Naive thymus-derived CD4-positive, alpha-beta T cell (primary cell): ENCODE measurements at regions of chr13 and their contacts with region 1.

Region 1: DNA sequence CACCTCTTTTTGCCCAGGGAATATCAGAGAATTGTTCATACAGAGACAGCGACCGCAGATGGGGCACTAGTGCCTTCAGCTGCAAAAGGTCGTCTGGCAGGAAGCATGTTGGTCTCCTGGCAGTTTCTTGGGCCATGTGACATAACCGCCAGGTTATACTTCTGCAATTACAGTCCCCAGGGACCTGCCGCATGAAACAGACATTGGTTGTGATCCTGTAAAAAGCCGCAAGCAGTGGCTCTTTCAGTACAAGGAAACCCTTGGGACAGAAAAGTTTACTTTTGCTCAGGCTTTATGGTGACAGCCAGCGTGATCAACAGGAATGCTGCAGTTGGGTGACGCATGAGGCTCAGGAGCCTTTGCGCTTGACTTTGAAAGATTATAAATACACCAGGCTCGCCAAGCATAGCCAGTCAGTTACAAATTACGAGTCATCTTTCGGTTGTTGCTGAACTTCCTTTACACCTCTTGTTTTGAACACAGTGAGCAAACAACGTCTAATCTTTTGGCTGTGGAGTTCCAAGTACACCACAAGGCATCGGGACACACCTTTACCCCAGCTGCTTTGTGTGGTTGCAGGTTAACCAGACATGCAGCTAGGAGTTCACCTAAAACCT is 50.5 kb upstream of the UBE2L5 start:
- DNase-seq: peak; percentile 22 to 92 (median 89)
- ATAC-seq: peak; percentile 78
- H3K4me3 ChIP-seq: peak overlapping the region; percentile 37
- H3K4me3 Mint-ChIP-seq: peak overlapping the region; percentile 51 to 91 (median 76)
- H3K27ac ChIP-seq: peak overlapping the region; percentile 58
- H3K27ac Mint-ChIP-seq: peak overlapping the region; percentile 90 to 98 (median 95)
- H3K4me1 ChIP-seq: peaks cover 73% of the 10 kb centered on the region in 2 donors
- H3K4me1 Mint-ChIP-seq: peaks cover 68 to 87% (median 78%) of the 10 kb centered on the region in 7 donors
- H3K27me3 ChIP-seq: no peaks in the 10 kb centered on the region
- H3K27me3 Mint-ChIP-seq: no peaks in the 10 kb centered on the region

Region 2: GRCh38 chr13:29801737-29802305 is 569.9 kb before region 1 on chr13:
- CTCF ChIA-PET with region 1: no interaction called
- POLR2A ChIA-PET with region 1: no interaction called
- intact Hi-C with region 1: no loop called
- DNase-seq: no peak
- ATAC-seq: no peak
- H3K4me3 ChIP-seq: no peak overlapping the region
- H3K4me3 Mint-ChIP-seq: no peak overlapping the region
- H3K27ac ChIP-seq: no peak overlapping the region
- H3K27ac Mint-ChIP-seq: no peak overlapping the region
- H3K4me1 ChIP-seq: peaks cover 0 to 4% of the 10 kb centered on the region in 2 donors
- H3K4me1 Mint-ChIP-seq: peaks cover 2 to 46% (median 34%) of the 10 kb centered on the region in 7 donors
- H3K27me3 ChIP-seq: no peaks in the 10 kb centered on the region
- H3K27me3 Mint-ChIP-seq: no peaks in the 10 kb centered on the region

Region 3: GRCh38 chr13:30132623-30133553 is 238.9 kb before region 1 on chr13:
- CTCF ChIA-PET with region 1: interaction called, 12 read pairs
- POLR2A ChIA-PET with region 1: interaction called, 20 read pairs
- intact Hi-C with region 1: loop called in 1 of 2 experiments (anchors 1 kb)
- DNase-seq: peak; percentile 91 to 98 (median 95)
- ATAC-seq: peak; percentile 99
- H3K4me3 ChIP-seq: peak overlapping the region; percentile 16
- H3K4me3 Mint-ChIP-seq: peak overlapping the region in 8 of 10 donors; percentile 33 to 73 (median 64)
- H3K27ac ChIP-seq: no peak overlapping the region
- H3K27ac Mint-ChIP-seq: peak overlapping the region in 8 of 9 donors; percentile 11 to 89 (median 72)
- H3K4me1 ChIP-seq: peaks cover 4 to 7% of the 10 kb centered on the region in 2 donors
- H3K4me1 Mint-ChIP-seq: peaks cover 12 to 19% (median 17%) of the 10 kb centered on the region in 7 donors
- H3K27me3 ChIP-seq: no peaks in the 10 kb centered on the region
- H3K27me3 Mint-ChIP-seq: no peaks in the 10 kb centered on the region

Region 4: GRCh38 chr13:30346153-30346788 is 25.5 kb before region 1 on chr13:
- CTCF ChIA-PET with region 1: interaction called, 8 read pairs
- POLR2A ChIA-PET with region 1: interaction called, 16 read pairs
- intact Hi-C with region 1: loop called (anchors 1 kb)
- DNase-seq: peak in 7 of 9 donors; percentile 59 to 86 (median 73)
- ATAC-seq: peak; percentile 94
- H3K4me3 ChIP-seq: peak overlapping the region; percentile 7
- H3K4me3 Mint-ChIP-seq: peak overlapping the region; percentile 46 to 82 (median 75)
- H3K27ac ChIP-seq: no peak overlapping the region
- H3K27ac Mint-ChIP-seq: peak overlapping the region; percentile 23 to 84 (median 62)
- H3K4me1 ChIP-seq: peaks cover 29 to 31% of the 10 kb centered on the region in 2 donors
- H3K4me1 Mint-ChIP-seq: peaks cover 35 to 60% (median 48%) of the 10 kb centered on the region in 7 donors
- H3K27me3 ChIP-seq: no peaks in the 10 kb centered on the region
- H3K27me3 Mint-ChIP-seq: peaks cover 0 to 2% (median 0%) of the 10 kb centered on the region in 5 donors

Region 5: DNA sequence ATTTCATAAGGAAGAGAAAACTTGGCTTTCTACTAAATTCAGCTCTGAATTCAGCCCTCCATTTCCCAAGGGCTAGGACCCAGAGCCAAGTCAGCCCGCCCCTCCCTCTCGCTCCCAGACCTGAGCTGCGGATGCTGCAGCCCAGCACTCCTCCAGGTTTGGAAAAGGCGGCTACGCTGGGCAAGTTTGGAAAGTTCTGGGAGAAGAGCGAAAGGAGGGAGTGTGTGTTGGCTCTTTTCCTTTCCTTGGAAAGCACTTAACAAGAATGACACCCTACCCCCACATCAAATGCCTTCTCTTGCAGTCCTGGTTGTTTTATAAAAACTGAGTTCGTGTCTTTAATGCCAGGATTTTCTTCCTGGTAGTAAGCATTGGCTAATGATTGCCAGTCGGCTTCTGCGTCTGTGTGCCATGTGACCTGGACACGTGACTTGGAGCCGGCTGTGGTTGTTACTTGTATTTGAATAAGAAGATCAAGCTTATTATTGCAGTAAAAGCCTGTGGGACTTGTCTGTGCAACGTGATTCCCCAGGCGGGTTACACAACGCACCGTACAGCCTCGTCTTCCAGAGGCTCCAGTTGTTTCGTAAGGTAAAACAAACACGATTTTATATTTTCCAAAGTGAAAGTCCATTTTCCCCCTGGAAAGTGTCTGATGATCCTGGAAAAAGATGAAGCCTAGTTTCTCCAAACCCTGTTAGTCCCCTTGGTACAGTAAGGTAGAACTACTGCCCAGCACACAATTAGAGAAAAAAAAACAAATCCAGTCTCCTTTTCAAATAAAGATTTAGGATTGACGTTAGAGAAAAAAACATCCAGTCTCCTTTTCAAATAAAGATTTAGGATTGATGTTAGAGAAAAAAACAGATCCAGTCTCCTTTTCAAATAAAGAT is 23.7 kb after region 1 on chr13:
- CTCF ChIA-PET with region 1: interaction called, 56 read pairs
- POLR2A ChIA-PET with region 1: interaction called, 281 read pairs
- intact Hi-C with region 1: loop called (anchors 1 kb)
- DNase-seq: peak; percentile 22 to 83 (median 71)
- ATAC-seq: peak; percentile 82
- H3K4me3 ChIP-seq: peak overlapping the region; percentile 71
- H3K4me3 Mint-ChIP-seq: peak overlapping the region; percentile 83 to 97 (median 88)
- H3K27ac ChIP-seq: peak overlapping the region; percentile 78
- H3K27ac Mint-ChIP-seq: peak overlapping the region; percentile 90 to 97 (median 95)
- H3K4me1 ChIP-seq: peaks cover 16 to 31% of the 10 kb centered on the region in 2 donors
- H3K4me1 Mint-ChIP-seq: peaks cover 17 to 58% (median 54%) of the 10 kb centered on the region in 7 donors
- H3K27me3 ChIP-seq: no peaks in the 10 kb centered on the region
- H3K27me3 Mint-ChIP-seq: no peaks in the 10 kb centered on the region

Region 6: GRCh38 chr13:30572859-30573275 is 201.1 kb after region 1 on chr13:
- CTCF ChIA-PET with region 1: interaction called, 3 read pairs
- POLR2A ChIA-PET with region 1: interaction called, 3 read pairs
- intact Hi-C with region 1: loop called in 1 of 2 experiments (anchors 1 kb)
- DNase-seq: peak in 7 of 9 donors; percentile 19 to 65 (median 49)
- ATAC-seq: peak; percentile 69
- H3K4me3 ChIP-seq: peak overlapping the region; percentile 55
- H3K4me3 Mint-ChIP-seq: peak overlapping the region; percentile 66 to 88 (median 81)
- H3K27ac ChIP-seq: peak overlapping the region; percentile 81
- H3K27ac Mint-ChIP-seq: peak overlapping the region; percentile 88 to 97 (median 94)
- H3K4me1 ChIP-seq: peaks cover 13 to 24% of the 10 kb centered on the region in 2 donors
- H3K4me1 Mint-ChIP-seq: peaks cover 14 to 42% (median 36%) of the 10 kb centered on the region in 7 donors
- H3K27me3 ChIP-seq: no peaks in the 10 kb centered on the region
- H3K27me3 Mint-ChIP-seq: peaks cover 0 to 3% (median 0%) of the 10 kb centered on the region in 5 donors

Region 7: DNA sequence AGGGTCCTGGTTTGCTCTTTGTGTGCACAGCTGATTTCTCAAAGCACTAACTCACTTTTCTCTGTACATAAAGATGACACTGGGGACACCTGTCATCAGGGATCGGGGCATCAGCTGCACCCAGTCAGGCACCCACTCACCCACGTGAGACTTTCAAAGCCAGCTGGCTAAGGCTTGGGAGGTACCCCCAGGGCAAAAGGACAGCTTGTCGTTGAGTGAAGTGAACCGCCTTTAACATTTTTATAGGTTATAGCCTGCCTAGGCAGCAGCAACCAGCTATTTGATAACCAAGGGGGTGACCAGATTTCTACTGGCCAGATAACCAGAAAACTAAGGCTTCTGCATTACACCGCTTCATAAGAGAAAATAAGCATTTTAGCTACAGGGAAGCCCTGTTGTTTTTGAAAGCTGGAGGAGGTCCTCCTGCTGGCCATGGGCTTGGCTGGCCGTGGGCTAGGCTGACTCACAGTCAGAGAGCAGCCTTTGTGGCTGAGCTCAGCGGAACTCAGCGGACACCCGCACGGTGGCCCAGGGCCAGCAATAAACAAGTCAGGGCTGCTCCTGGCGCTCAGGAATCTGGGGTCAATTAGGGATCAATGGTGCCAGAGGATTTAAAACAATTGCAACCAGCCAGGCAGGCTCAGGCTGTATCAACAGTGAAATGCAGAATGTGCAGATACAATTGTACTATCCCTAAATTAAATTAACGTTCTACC is 420.7 kb after region 1 on chr13:
- CTCF ChIA-PET with region 1: no interaction called
- POLR2A ChIA-PET with region 1: no interaction called
- intact Hi-C with region 1: no loop called
- DNase-seq: no peak
- ATAC-seq: no peak
- H3K4me3 ChIP-seq: no peak overlapping the region
- H3K4me3 Mint-ChIP-seq: no peak overlapping the region
- H3K27ac ChIP-seq: no peak overlapping the region
- H3K27ac Mint-ChIP-seq: no peak overlapping the region
- H3K4me1 ChIP-seq: peaks cover 0 to 9% of the 10 kb centered on the region in 2 donors
- H3K4me1 Mint-ChIP-seq: peaks cover 6 to 32% (median 8%) of the 10 kb centered on the region in 7 donors
- H3K27me3 ChIP-seq: no peaks in the 10 kb centered on the region
- H3K27me3 Mint-ChIP-seq: no peaks in the 10 kb centered on the region

Region 8: DNA sequence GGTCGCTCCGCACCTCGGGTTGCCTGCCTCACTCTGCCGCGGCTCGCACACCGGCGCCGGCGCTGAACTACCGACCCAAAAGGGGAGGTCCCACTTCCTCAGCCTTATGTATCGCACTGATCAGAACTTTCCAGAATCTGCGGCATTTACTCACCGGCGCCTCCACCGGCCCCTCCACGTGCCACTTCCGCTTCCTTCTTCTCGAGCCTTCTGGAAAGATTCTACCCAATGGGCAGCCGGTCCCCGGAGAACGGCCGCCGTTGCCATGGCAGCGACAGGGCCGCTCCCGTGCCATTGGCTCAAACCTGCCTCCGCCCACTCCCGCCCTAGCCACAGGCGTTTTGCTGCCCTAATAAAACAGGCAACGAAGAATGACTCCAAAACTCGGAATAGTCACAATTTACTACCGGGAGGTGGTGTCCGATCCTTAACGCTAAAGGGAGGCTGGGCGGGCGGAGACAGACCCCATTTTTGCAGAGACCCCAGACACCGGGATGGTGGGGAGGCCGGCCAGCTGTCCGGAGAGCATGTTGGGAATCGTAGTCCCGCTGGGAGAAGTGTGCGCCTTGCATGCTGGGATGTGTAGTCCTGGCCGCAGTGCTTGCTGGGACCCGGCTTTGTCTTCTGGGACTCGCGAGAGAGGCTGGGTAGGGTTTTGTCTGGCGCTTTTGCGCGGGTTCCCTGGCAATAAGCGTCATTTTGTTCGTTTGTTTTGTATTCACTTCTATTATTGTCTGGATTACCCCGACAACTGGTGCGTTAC is 790.3 kb after region 1 on chr13 and contains the start of gene HSPH1:
- CTCF ChIA-PET with region 1: no interaction called
- POLR2A ChIA-PET with region 1: no interaction called
- intact Hi-C with region 1: loop called in 1 of 2 experiments (anchors 10 kb)
- DNase-seq: peak; percentile 95 to 100 (median 99)
- ATAC-seq: peak; percentile 91
- H3K4me3 ChIP-seq: peak within 1 kb of the TSS; percentile 89
- H3K4me3 Mint-ChIP-seq: peak within 1 kb of the TSS; percentile 92 to 98 (median 94)
- H3K27ac ChIP-seq: peak within 1 kb of the TSS; percentile 96
- H3K27ac Mint-ChIP-seq: peak within 1 kb of the TSS; percentile 98 to 99 (median 99)
- H3K4me1 ChIP-seq: peaks cover 22 to 26% of the 10 kb centered on the region in 2 donors
- H3K4me1 Mint-ChIP-seq: peaks cover 23 to 52% (median 47%) of the 10 kb centered on the region in 7 donors
- H3K27me3 ChIP-seq: no peaks in the 10 kb centered on the region
- H3K27me3 Mint-ChIP-seq: peaks cover 0 to 3% (median 0%) of the 10 kb centered on the region in 5 donors
- total RNA-seq, gene HSPH1: 65.5 to 154 (median 107) TPM